Sciatic nerve (tissue), 2 donors: ENCODE measurements at regions of chr10 and their contacts with region 1.

Region 1: GRCh38 chr10:36462194-36462593 is 663.2 kb upstream of the ANKRD30A start:
- DNase-seq: no peak
- ATAC-seq: no peak

Region 2: DNA sequence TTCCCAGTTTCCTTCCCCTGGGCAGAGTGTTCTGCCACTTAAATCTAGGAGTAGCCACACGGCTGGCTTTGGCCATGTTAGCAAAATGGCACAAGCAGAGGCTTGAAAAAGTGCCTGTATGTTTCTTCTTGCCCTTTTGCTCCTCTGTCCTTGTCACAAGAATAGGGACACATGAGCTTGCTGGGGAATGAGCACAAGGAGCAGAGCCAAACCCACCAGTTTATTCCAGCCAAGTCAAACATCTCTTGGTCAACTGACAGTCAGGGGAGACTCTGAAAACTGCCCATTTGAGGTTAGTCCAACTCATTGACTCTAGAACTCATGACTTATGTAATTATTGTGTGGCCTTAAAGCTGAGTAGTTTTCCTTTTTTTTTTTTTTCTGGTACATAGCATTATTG is 80.4 kb before region 1 on chr10:
- intact Hi-C with region 1: no loop called
- DNase-seq: no peak
- ATAC-seq: peak; percentile 89

Region 3: DNA sequence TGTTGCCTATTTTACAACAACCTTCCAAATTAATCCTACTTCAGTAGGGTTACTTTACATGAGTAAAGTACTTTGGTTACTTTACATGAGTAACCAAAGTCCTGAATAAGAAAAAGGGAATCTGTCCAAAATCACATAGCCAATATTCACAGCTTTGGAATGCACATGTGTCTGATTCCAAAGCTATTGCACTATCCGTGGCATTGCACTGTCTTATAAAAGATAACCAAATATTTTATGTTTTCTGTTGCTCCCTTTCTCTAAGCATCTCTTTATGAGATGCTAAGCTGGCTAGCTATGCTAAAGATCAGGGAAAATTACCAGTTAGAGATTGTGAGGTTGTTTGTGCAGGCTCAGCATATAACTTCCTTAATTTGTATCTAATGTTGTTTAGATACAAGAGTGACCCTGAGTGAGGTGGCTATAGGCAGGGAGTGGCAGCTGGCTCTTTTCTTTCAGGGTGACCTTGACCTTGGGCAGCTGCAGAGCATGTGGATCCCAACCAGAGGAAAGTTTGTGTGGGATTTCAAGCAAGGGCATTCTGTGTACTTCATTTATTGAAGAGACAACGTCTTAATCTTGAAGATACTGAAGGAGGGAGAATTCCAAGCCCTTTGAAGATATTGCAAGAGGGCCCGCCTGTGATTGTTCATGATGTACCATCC is 297.1 kb after region 1 on chr10:
- intact Hi-C with region 1: loop called (anchors 5 kb)
- DNase-seq: no peak
- ATAC-seq: no peak